Activated B cell treated with CpG ODN at 0.5 μM for 24 hours (primary cell): ENCODE measurements at regions of chr3 and their contacts with region 1.

Region 1: GRCh38 chr3:119898478-119899191 is 116.7 kb downstream of the NR1I2 start:
- DNase-seq: no peak
- ATAC-seq: no peak
- H3K4me3 Mint-ChIP-seq: no peak overlapping the region
- H3K27ac Mint-ChIP-seq: no peak overlapping the region
- H3K4me1 Mint-ChIP-seq: no peaks in the 10 kb centered on the region
- H3K27me3 Mint-ChIP-seq: no peaks in the 10 kb centered on the region
- CTCF ChIP-seq: no peak

Region 2: GRCh38 chr3:119570216-119570615 is 328.4 kb before region 1 on chr3:
- CTCF ChIA-PET with region 1: no interaction called
- POLR2A ChIA-PET with region 1: no interaction called
- intact Hi-C with region 1: no loop called
- DNase-seq: no peak
- ATAC-seq: peak; percentile 25
- H3K4me3 Mint-ChIP-seq: no peak overlapping the region
- H3K27ac Mint-ChIP-seq: no peak overlapping the region
- H3K4me1 Mint-ChIP-seq: peaks cover 19% of the 10 kb centered on the region
- H3K27me3 Mint-ChIP-seq: no peaks in the 10 kb centered on the region
- CTCF ChIP-seq: no peak

Region 3: GRCh38 chr3:120147072-120147871 is 248.6 kb after region 1 on chr3:
- CTCF ChIA-PET with region 1: interaction called, 117 read pairs
- POLR2A ChIA-PET with region 1: no interaction called
- intact Hi-C with region 1: no loop called
- DNase-seq: no peak
- ATAC-seq: peak; percentile 56
- H3K4me3 Mint-ChIP-seq: no peak overlapping the region
- H3K27ac Mint-ChIP-seq: no peak overlapping the region
- H3K4me1 Mint-ChIP-seq: no peaks in the 10 kb centered on the region
- H3K27me3 Mint-ChIP-seq: no peaks in the 10 kb centered on the region
- CTCF ChIP-seq: no peak